Left lung (tissue), 14 donors: ENCODE measurements at regions of chr17 and their contacts with region 1.

Region 1: GRCh38 chr17:35537601-35538141 is at the start of gene SLFN12L:
- DNase-seq: peak in 2 of 4 donors; percentile 80 to 87
- ATAC-seq: peak; percentile 8
- H3K4me3 ChIP-seq: peak within 1 kb of the TSS in 1 of 2 donors; percentile 26
- H3K27ac ChIP-seq: peak within 1 kb of the TSS; percentile 34 to 47
- H3K4me1 ChIP-seq: peaks cover 15 to 53% of the 10 kb centered on the region in 2 donors
- H3K27me3 ChIP-seq: no peaks in the 10 kb centered on the region
- CTCF ChIP-seq: no peak
- polyA plus RNA-seq, gene SLFN12L: 14.5 to 30.4 (median 17.4) TPM

Region 2: DNA sequence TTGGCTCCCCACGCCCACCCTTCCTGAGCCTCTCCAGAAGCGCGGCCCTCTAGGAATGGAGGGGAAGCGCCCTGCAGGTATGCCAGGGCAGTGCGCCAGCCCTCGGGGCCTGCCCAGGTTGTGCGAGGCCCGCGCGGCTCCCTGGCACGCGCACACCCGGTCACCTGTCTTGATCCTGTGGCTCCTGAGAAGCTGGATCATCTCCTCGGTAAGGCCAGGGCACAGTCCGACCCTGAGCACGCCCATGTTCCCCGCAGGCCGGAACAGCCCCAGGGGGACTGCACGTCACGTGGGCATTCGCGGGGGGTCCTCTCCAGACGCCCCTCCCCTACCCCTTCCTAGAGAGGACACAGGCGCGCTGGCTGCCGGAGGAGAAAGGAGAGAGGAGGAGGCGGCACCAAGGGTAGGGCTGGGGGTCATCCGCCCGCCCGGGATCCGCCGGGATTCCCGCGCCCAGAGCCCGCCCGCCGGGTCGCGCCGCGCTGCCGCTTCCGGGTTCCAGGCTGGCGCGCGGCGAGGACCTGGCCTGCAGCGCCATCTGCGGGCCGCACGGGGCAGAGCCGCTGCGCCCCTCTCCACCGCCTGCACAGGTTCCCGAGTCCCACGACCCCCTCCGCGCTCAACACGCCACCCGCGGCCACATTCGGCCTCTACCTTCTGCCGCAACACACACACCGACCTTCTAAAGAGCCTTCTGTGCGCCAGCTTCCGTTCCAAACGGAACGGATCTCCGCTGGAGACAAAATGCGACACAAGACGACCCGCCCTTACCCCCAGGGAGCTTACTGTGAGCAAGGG is 418.1 kb before region 1 on chr17 and contains the start of gene RAD51D:
- intact Hi-C with region 1: no loop called
- DNase-seq: peak; percentile 64 to 96 (median 78)
- ATAC-seq: peak; percentile 99
- H3K4me3 ChIP-seq: peak within 1 kb of the TSS; percentile 60 to 83
- H3K27ac ChIP-seq: peak within 1 kb of the TSS; percentile 67 to 79
- H3K4me1 ChIP-seq: peaks cover 15 to 24% of the 10 kb centered on the region in 2 donors
- H3K27me3 ChIP-seq: no peaks in the 10 kb centered on the region
- CTCF ChIP-seq: peak; percentile 87 to 98
- polyA plus RNA-seq, gene RAD51D: 15.4 to 18.0 (median 16.4) TPM

Region 3: GRCh38 chr17:35161281-35161761 is 376.4 kb before region 1 on chr17:
- intact Hi-C with region 1: loop called in 1 of 2 experiments (anchors 10 kb)
- DNase-seq: peak in 1 of 4 donors; percentile 47
- ATAC-seq: no peak
- H3K4me3 ChIP-seq: no peak overlapping the region
- H3K27ac ChIP-seq: no peak overlapping the region
- H3K4me1 ChIP-seq: peaks cover 0 to 6% of the 10 kb centered on the region in 2 donors
- H3K27me3 ChIP-seq: no peaks in the 10 kb centered on the region
- CTCF ChIP-seq: no peak